A549 (cell line): ENCODE measurements at regions of chr2 and their contacts with region 1.

Region 1: DNA sequence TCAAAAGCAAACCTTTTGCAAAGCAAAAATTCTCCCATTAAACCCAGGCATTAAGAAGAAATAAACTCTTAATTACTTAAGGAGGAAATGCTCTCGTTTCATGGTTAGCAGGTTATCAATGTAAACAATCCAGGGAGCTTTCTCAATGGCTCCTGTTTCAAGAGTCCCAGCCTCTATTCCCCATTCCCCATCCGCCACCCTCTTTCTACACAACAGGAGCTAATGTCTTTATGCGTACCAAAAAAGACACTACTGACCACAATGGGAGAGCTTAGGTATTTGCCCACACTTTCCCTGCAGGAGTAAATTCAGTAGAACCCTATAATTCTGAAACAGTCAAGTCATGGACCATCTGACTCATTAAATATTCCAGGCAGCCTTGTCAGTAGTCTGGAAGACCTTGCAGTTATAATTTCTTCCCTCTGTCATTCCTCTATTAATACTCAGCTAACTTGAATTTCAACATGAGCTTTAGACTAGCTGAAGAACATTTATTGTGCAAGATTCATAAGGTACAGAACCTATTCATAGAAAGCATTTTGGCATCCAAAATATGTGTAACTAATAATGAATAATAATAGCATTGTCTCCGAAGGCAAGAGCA is 48.6 kb downstream of the SLC8A1 start:
- DNase-seq: peak in 1 of 2 experiments; percentile 4
- ATAC-seq: peak; percentile 13 to 56; a peak in 4 of 6 replicates
- H3K4me3 ChIP-seq: no peak overlapping the region
- H3K27ac ChIP-seq: no peak overlapping the region
- H3K4me1 ChIP-seq: peaks cover 12% of the 10 kb centered on the region
- CTCF ChIP-seq: no peak
- EP300 ChIP-seq: no peak
- POLR2A ChIP-seq: no peak
- RAD21 ChIP-seq: no peak

Region 2: DNA sequence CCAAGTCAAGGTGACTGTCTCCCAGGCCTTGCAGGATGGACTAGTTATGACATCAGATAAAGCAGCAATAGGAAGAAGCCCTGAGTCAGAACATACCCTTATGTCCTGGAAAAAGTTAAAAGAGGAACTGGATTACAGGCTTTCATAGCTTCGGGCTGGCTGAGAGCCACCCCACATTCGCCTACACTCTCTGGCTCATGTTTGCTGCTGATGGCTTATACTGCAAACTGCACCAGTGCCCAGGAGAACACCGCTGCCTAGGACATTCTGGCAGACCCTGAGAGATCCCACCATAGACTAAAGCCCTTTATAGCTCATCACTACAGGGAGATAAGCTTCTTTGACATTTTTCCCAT is 28.2 kb after region 1 on chr2:
- CTCF ChIA-PET with region 1: interaction called, 10 read pairs
- POLR2A ChIA-PET with region 1: no interaction called
- DNase-seq: no peak
- ATAC-seq: no peak
- H3K4me3 ChIP-seq: no peak overlapping the region
- H3K27ac ChIP-seq: 0 out of 6 replicates have a peak overlapping the region, but pooled peaks of 1 of the 2 experiments have one; percentile 4
- H3K4me1 ChIP-seq: peaks cover 27% of the 10 kb centered on the region
- CTCF ChIP-seq: no peak
- EP300 ChIP-seq: no peak
- POLR2A ChIP-seq: no peak
- RAD21 ChIP-seq: no peak